Activated naive CD4-positive, alpha-beta T cell treated with anti-CD3 and anti-CD28 coated beads, Interleukin-2, amount 10 ng/mL, durations not matched to agents 7 days and 5 days (primary cell): ENCODE measurements at regions of chr15 and their contacts with region 1.

Region 1: GRCh38 chr15:78108299-78109084 is 16.1 kb downstream of the SH2D7 start:
- DNase-seq: peak; percentile 91
- H3K4me3 Mint-ChIP-seq: no peak overlapping the region
- H3K27ac Mint-ChIP-seq: no peak overlapping the region
- H3K4me1 Mint-ChIP-seq: peaks cover 58% of the 10 kb centered on the region
- H3K27me3 Mint-ChIP-seq: no peaks in the 10 kb centered on the region

Region 2: DNA sequence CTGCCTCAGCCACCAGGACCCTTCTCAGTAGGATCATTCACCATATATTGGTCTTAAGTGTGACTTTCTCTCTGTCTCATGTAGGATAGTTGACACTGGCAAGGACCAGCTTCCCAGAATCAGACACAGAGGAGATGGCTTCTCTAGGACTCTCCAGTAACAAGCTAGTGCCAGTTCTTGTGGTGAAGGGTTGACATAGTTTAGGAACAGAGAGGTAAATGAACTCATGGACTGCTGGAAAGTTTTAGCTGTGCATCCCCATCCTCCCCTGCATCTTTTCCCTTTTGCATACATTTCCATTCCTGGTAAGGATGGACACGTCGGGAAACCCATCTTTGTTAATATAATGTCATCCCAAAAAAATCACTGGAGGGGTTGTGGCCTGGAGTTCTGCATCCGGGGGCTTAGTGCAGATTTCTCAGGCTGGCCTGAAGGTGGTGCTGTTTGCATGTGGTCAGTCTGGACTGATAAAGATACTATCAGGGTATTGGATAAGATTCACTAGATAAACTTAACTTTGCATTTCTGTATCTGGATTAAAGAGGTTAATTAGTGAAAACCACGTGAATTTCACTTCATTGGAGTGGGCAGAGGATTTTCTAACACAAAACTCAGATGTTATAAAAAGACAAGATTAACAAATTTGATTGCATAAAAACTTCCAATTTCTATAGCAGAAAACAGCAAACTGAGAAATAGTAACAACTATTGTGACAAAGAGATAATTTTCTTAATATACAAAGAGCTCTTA is 141.8 kb before region 1 on chr15:
- CTCF ChIA-PET with region 1: interaction called, 156 read pairs
- DNase-seq: peak; percentile 67
- H3K4me3 Mint-ChIP-seq: no peak overlapping the region
- H3K27ac Mint-ChIP-seq: no peak overlapping the region
- H3K4me1 Mint-ChIP-seq: no peaks in the 10 kb centered on the region
- H3K27me3 Mint-ChIP-seq: peaks cover 39% of the 10 kb centered on the region

Region 3: DNA sequence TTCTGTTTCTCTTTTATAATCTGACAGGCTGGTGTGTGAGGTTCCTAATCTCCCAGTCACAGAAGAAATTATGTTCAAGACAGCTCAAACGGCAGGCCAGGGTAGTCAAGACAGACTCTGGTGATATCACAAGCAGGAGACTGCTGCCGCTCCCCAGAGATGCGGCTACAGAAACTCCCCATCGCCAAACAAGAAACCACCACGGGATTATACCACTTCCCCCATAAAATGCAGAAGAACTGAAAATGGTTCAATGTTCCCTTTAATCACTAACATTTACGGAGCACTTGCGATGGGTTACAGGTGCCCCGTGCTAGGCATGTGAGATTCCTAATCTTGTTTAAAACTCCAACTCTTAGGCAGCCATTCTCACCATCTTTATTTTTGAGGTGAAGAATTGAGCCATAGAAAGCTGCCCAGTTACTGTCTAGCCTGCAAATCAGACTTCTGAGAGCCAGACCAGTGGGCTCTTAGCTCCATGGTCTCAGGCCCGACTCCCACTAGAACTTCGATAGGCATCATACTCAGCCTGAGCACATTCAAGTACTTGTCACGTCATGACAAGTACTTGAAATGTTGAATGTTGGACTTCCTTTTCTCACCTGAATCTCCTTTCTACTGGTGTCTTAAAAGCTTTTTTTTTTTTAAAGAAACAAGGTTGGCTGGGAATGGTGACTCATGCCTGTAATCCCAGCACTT is 89.4 kb before region 1 on chr15:
- CTCF ChIA-PET with region 1: interaction called, 16 read pairs
- DNase-seq: peak; percentile 39
- H3K4me3 Mint-ChIP-seq: no peak overlapping the region
- H3K27ac Mint-ChIP-seq: peak overlapping the region; percentile 68
- H3K4me1 Mint-ChIP-seq: peaks cover 25% of the 10 kb centered on the region
- H3K27me3 Mint-ChIP-seq: no peaks in the 10 kb centered on the region

Region 4: GRCh38 chr15:78049691-78050440 is 58.6 kb before region 1 on chr15:
- CTCF ChIA-PET with region 1: interaction called, 35 read pairs
- DNase-seq: peak; percentile 71
- H3K4me3 Mint-ChIP-seq: peak overlapping the region; percentile 18
- H3K27ac Mint-ChIP-seq: peak overlapping the region; percentile 93
- H3K4me1 Mint-ChIP-seq: peaks cover 91% of the 10 kb centered on the region
- H3K27me3 Mint-ChIP-seq: no peaks in the 10 kb centered on the region

Region 5: DNA sequence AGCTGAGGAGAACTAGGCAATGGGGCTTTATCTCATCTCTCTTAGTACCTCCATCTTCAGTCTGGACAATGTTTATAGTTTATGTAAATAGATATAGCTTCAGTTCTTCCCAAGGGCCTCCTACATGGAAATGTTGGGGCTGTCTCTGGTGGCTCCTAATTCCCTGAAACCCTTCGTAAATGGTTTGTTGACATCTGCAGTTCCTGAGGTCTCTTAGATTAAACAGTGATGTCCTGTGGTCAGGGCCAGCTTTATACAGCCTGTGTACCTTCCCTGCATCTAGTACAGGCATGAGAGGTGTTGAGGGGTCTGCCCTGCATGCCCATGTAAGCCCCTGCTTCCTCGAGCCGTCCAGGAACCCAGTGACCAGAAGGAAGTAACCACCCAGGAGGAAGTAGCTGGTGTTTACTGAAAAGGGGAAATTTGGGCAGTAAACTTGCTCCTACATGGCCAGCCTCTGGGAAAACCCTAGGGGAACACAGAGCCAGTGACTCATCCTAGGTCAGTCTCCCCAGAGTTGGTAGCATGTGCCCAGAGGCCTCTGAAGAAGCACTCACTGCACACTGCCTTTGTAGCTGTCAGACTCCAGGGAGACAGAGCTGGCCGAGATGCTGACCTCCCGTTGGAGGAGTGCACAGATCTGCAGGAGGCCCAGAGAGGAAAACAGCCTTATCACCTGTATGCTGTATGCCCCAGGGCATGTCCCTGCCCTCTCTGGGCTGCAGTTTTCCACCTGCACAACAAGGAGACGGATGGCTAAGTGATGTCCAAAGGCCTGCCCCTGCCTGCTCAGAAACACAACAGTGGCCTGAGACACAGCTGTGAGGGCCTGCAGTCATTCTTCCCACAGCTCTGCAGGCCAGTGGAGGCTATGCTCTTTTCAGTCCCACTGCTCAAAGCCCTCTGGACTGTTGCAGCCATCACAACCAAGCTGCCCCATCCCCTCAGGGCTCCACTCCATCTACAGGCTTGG is 26.1 kb before region 1 on chr15:
- CTCF ChIA-PET with region 1: interaction called, 16 read pairs
- DNase-seq: no peak
- H3K4me3 Mint-ChIP-seq: no peak overlapping the region
- H3K27ac Mint-ChIP-seq: peak overlapping the region; percentile 58
- H3K4me1 Mint-ChIP-seq: peaks cover 34% of the 10 kb centered on the region
- H3K27me3 Mint-ChIP-seq: no peaks in the 10 kb centered on the region

Region 6: GRCh38 chr15:78195735-78196201 is 87.3 kb after region 1 on chr15:
- CTCF ChIA-PET with region 1: interaction called, 125 read pairs
- DNase-seq: peak; percentile 63
- H3K4me3 Mint-ChIP-seq: no peak overlapping the region
- H3K27ac Mint-ChIP-seq: no peak overlapping the region
- H3K4me1 Mint-ChIP-seq: no peaks in the 10 kb centered on the region
- H3K27me3 Mint-ChIP-seq: peaks cover 36% of the 10 kb centered on the region

Region 7: GRCh38 chr15:78527325-78527724 is 418.8 kb after region 1 on chr15:
- CTCF ChIA-PET with region 1: no interaction called
- DNase-seq: no peak
- H3K4me3 Mint-ChIP-seq: no peak overlapping the region
- H3K27ac Mint-ChIP-seq: no peak overlapping the region
- H3K4me1 Mint-ChIP-seq: no peaks in the 10 kb centered on the region
- H3K27me3 Mint-ChIP-seq: no peaks in the 10 kb centered on the region